Dendritic cell treated with granulocyte-macrophage colony-stimulating factor and Interleukin-4, amounts not matched to agents 40 ng/mL and 50 ng/mL, for 4 days (primary cell): ENCODE measurements at regions of chr11 and their contacts with region 1.

Region 1: GRCh38 chr11:77047007-77047927 is 13.1 kb downstream of the B3GNT6 start:
- H3K4me3 Mint-ChIP-seq: peak overlapping the region; percentile 61
- H3K27ac Mint-ChIP-seq: peak overlapping the region; percentile 53
- H3K4me1 Mint-ChIP-seq: peaks cover 16% of the 10 kb centered on the region
- H3K27me3 Mint-ChIP-seq: peaks cover 33% of the 10 kb centered on the region

Region 2: DNA sequence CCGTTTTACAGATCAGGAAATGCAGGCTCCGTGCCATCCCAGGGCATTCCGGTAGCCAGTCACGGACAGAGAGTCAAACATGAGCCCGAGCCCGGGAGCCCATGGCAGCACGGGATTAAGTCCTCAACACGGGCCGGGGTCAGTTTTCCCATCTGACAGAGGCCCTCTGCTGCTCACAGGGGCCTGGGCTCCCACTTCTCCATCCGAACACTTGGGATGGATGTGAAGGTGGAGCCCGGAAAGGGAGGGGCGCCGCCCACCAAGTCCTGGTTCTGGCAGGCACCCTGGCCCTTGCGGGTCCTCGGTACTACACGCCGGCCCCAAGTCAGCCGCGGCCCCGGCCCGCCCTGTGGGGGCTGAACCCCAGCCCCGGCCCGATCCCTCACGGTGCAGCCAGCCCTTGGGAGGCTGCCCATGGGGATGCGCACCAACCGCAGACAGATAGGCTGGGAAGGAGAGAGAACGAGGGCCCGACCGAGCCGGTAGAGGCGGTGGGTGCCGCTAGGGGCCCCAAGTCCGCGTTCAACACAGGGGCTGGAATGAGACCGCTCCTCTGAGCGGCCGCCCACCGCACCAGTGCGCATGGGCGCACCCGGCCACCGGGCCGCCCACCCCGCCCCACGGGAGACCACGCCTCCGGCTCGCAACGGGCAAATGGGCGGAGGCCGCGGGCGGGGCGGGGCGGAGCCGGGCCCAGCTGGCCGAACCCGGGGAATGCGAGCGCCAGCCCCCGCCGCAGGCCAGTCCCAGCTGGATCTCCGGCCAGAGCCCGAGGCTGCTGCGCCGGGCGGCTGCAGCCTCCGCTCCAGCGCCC is 19.2 kb after region 1 on chr11 and contains the start of gene CAPN5:
- intact Hi-C with region 1: loop called (anchors 2 kb)
- H3K4me3 Mint-ChIP-seq: peak within 1 kb of the TSS; percentile 77
- H3K27ac Mint-ChIP-seq: peak within 1 kb of the TSS; percentile 37
- H3K4me1 Mint-ChIP-seq: peaks cover 11% of the 10 kb centered on the region
- H3K27me3 Mint-ChIP-seq: peaks cover 45% of the 10 kb centered on the region

Region 3: DNA sequence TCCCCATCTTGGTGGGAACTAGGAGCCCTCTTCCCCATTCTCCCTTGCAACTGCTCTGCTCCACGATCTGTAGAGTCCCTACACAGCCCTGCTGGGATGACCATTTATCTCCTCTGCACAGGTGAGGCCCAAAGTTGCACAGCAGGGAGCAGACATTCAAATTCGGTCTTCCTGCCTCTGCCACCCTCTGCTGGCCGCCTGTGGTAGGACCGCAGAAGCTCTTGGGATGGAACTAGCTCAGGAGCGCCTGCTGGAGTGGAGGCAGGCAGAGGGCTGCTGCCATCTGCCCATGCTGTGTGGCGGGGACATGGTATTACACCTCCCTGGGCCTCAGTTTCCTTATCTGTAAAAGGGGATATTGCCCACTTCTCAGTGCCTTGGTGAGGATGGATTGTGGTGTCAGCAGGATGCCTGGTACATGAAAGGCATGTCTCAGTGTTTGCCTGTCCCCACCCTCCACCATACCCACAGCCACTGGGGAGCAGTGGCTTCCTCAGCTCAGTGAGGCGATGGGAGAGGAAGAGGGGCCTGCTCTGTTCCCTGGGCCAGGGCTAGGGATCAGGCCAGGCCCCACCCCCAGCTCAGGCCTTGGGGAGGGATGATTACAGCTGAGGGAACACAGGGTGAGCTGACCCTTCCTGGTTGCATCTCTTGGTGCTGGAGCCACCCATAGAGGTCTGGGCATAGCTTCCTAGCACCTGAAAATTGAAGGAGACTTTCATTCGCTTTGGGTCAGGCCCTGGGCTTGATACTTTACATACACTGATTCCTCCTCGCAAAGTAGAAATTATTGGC is 44.1 kb after region 1 on chr11:
- intact Hi-C with region 1: loop called (anchors 1 kb)
- H3K4me3 Mint-ChIP-seq: no peak overlapping the region
- H3K27ac Mint-ChIP-seq: no peak overlapping the region
- H3K4me1 Mint-ChIP-seq: no peaks in the 10 kb centered on the region
- H3K27me3 Mint-ChIP-seq: peaks cover 5% of the 10 kb centered on the region

Region 4: GRCh38 chr11:77187776-77188632 is 140.7 kb after region 1 on chr11:
- intact Hi-C with region 1: loop called (anchors 5 kb)
- H3K4me3 Mint-ChIP-seq: no peak overlapping the region
- H3K27ac Mint-ChIP-seq: no peak overlapping the region
- H3K4me1 Mint-ChIP-seq: peaks cover 14% of the 10 kb centered on the region
- H3K27me3 Mint-ChIP-seq: no peaks in the 10 kb centered on the region